ENCODE measurements at regions of chr14 and their contacts with region 1.

Region 1: GRCh38 chr14:90331497-90332435 is at the start of gene NRDE2:
- DNase-seq: peak; percentile 98
- H3K4me3 ChIP-seq: peak within 1 kb of the TSS; percentile 48 to 89 (median 79)
- H3K27ac ChIP-seq: peak within 1 kb of the TSS; percentile 91
- H3K4me1 ChIP-seq: peaks cover 6% of the 10 kb centered on the region
- H3K27me3 ChIP-seq: peaks cover 10% of the 10 kb centered on the region in 2 experiments
- CTCF ChIP-seq: no peak
- POLR2A ChIP-seq: peak; percentile 81
- total RNA-seq, gene NRDE2: 22.1 and 22.5 TPM in 2 replicates

Region 2: GRCh38 chr14:90383075-90383730 is 51.4 kb after region 1 on chr14:
- CTCF ChIA-PET with region 1: interaction called, 3 read pairs
- POLR2A ChIA-PET with region 1: no interaction called
- dilution Hi-C with region 1: no loop called
- intact Hi-C with region 1: loop called (anchors 1 kb)
- DNase-seq: peak; percentile 100
- H3K4me3 ChIP-seq: peak overlapping the region; percentile 47 to 70 (median 58)
- H3K27ac ChIP-seq: peak overlapping the region; percentile 97
- H3K4me1 ChIP-seq: peaks cover 17% of the 10 kb centered on the region
- H3K27me3 ChIP-seq: peaks cover 0 to 2% of the 10 kb centered on the region in 2 experiments
- CTCF ChIP-seq: no peak
- POLR2A ChIP-seq: peak; percentile 77